ENCODE measurements at regions of chr20 and their contacts with region 1.

Region 1: DNA sequence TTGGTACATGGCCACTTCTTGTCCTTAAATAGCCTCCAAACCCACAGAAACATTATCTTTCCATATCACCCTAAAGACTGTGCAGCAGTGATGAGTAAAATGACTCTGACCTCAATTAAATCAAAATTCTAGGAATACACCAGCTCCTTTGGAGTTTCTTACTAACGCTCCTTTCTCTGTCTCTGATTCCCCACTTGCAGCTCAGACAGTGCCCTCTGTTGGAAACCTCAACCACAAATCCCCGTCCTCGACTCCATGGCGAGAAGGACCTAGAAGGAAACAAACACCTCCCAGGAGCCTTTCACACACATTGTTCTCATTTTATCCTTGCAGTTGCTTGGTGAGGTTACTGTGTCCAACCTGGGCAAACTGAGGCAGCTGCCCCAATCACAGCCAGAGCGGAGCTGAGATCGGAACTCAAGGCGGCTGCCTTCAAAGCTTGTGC is 17.7 kb upstream of the PARD6B start:
- DNase-seq: peak; percentile 47

Region 2: DNA sequence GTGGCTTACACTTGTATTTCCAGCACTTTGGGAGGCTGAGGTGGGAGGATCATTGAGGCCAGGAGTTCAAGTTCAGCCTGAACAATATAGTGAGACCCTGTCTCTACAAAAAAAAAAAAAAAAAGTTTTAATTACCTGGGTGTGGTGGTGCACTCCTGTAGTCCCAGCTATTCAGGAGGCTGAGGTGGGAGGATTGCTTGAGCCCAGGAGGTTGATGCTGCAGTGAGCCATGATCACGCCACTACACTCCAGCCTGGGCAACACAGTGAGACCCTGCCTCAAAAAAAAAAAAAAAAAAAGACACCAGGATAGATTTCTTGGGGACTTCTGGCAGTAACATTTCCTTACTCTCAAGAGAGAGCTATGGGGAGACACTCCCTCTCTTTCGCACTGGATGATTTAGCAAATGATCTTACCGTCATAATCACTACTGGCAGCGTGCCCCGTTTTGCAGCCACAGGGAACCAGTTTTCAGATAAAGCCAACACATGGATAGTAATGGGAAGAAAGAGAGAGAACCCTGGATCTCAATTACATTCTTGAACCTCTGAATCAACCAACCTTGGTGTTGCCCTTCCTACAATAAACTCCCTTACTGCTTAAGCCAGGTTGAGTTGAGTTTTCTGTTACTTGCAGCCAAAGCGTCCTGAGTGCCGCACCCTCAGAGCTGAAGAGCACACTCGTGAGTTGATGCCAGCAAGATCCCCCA is 221.6 kb before region 1 on chr20:
- in situ Hi-C with region 1: no loop called
- DNase-seq: no peak

Region 3: DNA sequence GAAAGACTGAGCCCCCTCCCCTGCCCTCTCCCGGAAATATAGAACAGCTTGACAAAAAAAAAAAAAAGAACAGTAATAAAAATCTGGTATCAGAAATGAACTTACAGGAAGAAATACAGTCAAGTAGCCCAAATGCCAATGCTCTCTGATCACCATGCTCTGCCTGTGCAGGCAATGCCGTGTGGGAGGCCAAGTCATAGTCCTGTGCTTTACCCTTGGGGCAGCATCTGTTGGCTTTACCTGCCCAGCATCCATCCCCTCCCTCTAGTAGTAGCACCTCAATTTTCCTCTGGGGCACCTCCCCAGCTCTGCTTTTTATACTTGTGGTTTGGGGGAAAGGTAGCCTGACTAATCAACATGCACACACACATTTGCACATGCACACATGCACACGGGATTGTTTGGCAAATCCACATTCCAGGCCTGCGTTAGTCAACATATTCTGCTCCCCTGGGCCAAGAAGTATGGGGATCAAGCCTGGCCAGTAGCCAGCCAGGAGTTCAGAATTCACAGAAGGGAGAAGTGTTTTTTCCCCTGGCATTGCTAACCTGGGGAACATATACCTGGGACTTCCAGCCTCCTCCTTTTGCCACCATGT is 92.5 kb before region 1 on chr20:
- in situ Hi-C with region 1: no loop called
- DNase-seq: no peak

Region 4: DNA sequence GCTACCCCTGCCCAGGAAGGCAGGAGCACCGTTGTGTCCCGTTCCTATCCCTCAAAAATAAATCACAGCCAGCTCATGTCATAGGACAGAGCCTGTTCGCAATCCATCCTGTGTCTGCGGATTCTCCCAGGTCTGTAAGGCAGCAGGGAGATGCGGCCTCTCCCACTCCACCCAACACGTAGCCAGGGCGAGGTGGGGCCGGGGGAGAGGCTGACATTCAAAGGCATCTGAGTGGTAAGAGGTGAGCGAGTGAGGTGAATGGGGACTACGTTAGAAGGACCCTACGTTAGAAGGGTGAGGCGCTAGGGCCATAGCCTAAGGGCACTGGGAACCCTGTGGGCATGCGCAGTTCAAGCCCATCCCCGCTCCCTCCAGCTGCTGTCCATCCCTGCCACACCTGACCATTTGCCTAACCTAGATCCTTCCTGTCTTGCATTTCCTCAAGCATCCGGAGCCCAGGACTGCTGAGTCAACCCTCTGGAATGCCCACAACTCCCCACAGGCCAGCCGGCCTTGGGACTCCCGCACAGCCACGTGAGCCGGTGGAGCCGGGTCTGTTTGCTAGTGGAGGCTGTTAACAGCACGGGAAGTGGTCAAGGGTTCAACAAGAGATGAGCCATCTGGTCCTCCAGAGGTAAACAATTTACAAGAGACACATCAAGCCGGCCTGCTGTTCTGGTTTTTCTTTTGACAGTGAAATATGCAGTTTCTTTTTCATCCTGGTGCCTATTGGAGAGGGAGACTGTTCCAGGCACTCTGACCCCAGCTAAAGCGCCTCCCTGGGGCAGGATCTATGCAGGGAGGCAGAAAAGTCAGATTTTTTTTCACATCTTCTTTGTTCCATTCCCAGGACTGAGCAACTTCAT is 68.2 kb before region 1 on chr20:
- in situ Hi-C with region 1: loop called (anchors 10 kb)
- DNase-seq: peak; percentile 62

Measured in G401 (cell line).